ENCODE measurements at regions of chr6 and their contacts with region 1.

Region 1: GRCh38 chr6:30686908-30687658 is 638 bp upstream of the PPP1R18 start:
- DNase-seq: peak; percentile 90
- CTCF ChIP-seq: no peak

Region 2: DNA sequence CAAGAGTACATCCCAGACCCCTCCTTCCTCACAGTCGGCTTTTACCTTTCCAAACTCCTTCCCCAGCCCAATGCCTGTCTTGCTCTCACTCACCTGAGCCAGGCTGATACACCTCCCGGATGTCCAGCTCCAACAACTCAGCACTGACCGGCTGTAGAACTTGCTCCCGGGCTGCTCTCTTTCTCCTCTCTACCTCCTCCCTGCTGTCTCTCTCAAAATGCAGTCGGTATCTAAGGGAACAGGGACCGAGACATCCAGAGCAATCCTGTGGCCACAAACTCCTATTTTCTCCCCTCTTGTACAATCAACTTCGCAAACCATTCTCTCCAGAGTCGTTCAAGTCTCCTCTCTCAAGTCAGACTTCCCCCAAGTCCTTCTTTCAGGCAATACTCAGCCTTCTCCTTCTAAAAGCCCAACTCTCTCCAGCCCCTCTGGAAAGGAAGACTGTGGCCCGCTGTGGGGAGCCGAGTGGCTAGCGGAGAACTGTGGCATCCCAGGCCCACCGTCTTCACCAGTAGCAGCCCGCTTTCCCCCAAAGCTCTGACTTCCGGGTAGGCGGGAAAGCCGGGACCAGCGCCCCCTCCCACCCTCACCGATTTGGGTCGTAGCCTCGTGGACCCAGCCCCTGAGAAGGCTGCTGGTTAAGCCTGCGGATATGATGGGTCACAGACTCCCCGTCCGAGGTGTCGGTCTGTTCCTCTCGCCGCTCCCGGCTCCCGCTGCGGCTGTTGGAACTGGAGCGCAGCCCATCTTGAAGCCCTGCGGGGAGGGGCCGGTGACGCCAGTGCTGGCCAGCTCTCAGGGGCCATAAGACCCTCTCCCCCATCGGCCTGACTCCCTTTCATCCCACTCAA is 131.9 kb before region 1 on chr6:
- CTCF ChIA-PET with region 1: no interaction called
- POLR2A ChIA-PET with region 1: no interaction called
- DNase-seq: peak; percentile 28
- CTCF ChIP-seq: no peak

Region 3: GRCh38 chr6:30672445-30673253 is 14.4 kb before region 1 on chr6 and contains the start of gene DHX16:
- CTCF ChIA-PET with region 1: interaction called, 15 read pairs
- POLR2A ChIA-PET with region 1: interaction called, 3 read pairs
- DNase-seq: peak; percentile 92
- CTCF ChIP-seq: peak; percentile 91

Region 4: GRCh38 chr6:30707281-30707872 is 20.3 kb after region 1 on chr6:
- CTCF ChIA-PET with region 1: interaction called, 776 read pairs
- POLR2A ChIA-PET with region 1: interaction called, 3 read pairs
- DNase-seq: no peak
- CTCF ChIP-seq: no peak

Region 5: GRCh38 chr6:31094389-31094881 is 407.4 kb after region 1 on chr6:
- CTCF ChIA-PET with region 1: no interaction called
- POLR2A ChIA-PET with region 1: interaction called, 10 read pairs
- DNase-seq: no peak
- CTCF ChIP-seq: no peak